H1 (cell line): ENCODE measurements at regions of chr13 and their contacts with region 1.

Region 1: GRCh38 chr13:113410472-113411201 is 42.7 kb downstream of the ADPRHL1 start:
- DNase-seq: no peak
- H3K4me3 ChIP-seq: no peak overlapping the region
- H3K27ac ChIP-seq: no peak overlapping the region
- H3K4me1 ChIP-seq: peaks cover 0 to 7% (median 0%) of the 10 kb centered on the region in 4 experiments; a peak in 2 of 7 replicates
- H3K27me3 ChIP-seq: no peaks in the 10 kb centered on the region
- CTCF ChIP-seq: no peak
- EP300 ChIP-seq: no peak
- POLR2A ChIP-seq: no peak
- RAD21 ChIP-seq: no peak

Region 2: DNA sequence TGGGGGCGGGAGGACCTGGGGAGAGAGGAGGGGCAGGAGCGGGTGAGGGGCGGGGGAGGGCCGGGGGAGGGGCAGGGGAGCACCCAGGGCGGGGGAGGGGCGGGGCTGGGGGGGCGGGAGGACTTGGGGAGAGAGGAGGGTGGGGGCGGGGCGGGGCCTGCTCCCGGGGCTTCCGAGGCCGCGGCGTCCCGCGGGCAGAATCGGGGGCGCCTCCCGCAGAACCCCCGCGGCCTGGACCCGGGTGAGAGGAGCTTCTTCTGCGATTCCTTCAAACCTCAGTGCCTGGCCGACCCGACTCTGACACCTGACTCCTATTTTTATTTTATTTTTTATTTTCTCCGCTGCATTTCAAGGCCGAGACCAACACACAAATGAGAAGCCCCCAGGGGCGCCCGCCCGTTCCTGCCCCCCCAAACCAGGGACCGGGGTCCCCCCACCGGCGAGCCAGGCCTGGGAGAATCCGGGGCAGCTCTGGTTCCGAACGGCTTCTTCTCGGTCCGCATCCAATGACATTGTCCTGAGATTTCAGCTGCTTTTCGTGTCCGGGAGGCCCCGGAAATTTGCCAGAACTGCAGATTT is 46.2 kb before region 1 on chr13:
- CTCF ChIA-PET with region 1: no interaction called
- POLR2A ChIA-PET with region 1: no interaction called
- DNase-seq: no peak
- H3K4me3 ChIP-seq: peak overlapping the region in 3 of 4 experiments; percentile 6 to 52 (median 10); a peak in 4 of 8 replicates
- H3K27ac ChIP-seq: no peak overlapping the region; the same call in 1 of the 2 replicates
- H3K4me1 ChIP-seq: peaks cover 2 to 25% (median 7%) of the 10 kb centered on the region in 4 experiments
- H3K27me3 ChIP-seq: 0 out of 7 replicates have a peak, but pooled peaks cover 0 to 4% (median 0%) of the 10 kb centered on the region in 4 experiments
- CTCF ChIP-seq: no peak
- EP300 ChIP-seq: no peak
- POLR2A ChIP-seq: no peak; a peak in 1 of 3 replicates
- RAD21 ChIP-seq: no peak

Region 3: GRCh38 chr13:113398963-113399661 is 11.5 kb before region 1 on chr13:
- CTCF ChIA-PET with region 1: interaction called, 12 read pairs
- POLR2A ChIA-PET with region 1: interaction called, 6 read pairs
- DNase-seq: no peak
- H3K4me3 ChIP-seq: no peak overlapping the region
- H3K27ac ChIP-seq: no peak overlapping the region
- H3K4me1 ChIP-seq: peaks cover 0 to 14% (median 6%) of the 10 kb centered on the region in 4 experiments; a peak in 6 of 7 replicates
- H3K27me3 ChIP-seq: no peaks in the 10 kb centered on the region
- CTCF ChIP-seq: no peak
- EP300 ChIP-seq: no peak
- POLR2A ChIP-seq: no peak
- RAD21 ChIP-seq: no peak